Naive thymus-derived CD4-positive, alpha-beta T cell (primary cell): ENCODE measurements at regions of chr2 and their contacts with region 1.

Region 1: GRCh38 chr2:218568190-218569037 is at the starts of genes CNOT9 and USP37:
- DNase-seq: peak; percentile 99 to 100 (median 100)
- ATAC-seq: peak; percentile 95
- H3K4me3 ChIP-seq: peak within 1 kb of the TSS; percentile 78
- H3K4me3 Mint-ChIP-seq: peak within 1 kb of the TSS; percentile 90 to 100 (median 98)
- H3K27ac ChIP-seq: peak within 1 kb of the TSS; percentile 96
- H3K27ac Mint-ChIP-seq: peak within 1 kb of the TSS; percentile 97 to 100 (median 99)
- H3K4me1 ChIP-seq: peaks cover 22 to 31% of the 10 kb centered on the region in 2 donors
- H3K4me1 Mint-ChIP-seq: peaks cover 45 to 73% (median 64%) of the 10 kb centered on the region in 7 donors
- H3K27me3 ChIP-seq: no peaks in the 10 kb centered on the region
- H3K27me3 Mint-ChIP-seq: no peaks in the 10 kb centered on the region
- total RNA-seq, gene CNOT9: 44.7 to 99.6 (median 53.8) TPM
- total RNA-seq, gene USP37: 16.6 to 36.3 (median 28.1) TPM

Region 2: GRCh38 chr2:218216674-218217359 is 351.6 kb before region 1 on chr2 and contains the start of gene ARPC2:
- CTCF ChIA-PET with region 1: no interaction called
- POLR2A ChIA-PET with region 1: interaction called, 3 read pairs
- intact Hi-C with region 1: loop called (anchors 1 to 2 kb)
- DNase-seq: peak; percentile 91 to 97 (median 95)
- ATAC-seq: peak; percentile 90
- H3K4me3 ChIP-seq: peak within 1 kb of the TSS; percentile 90
- H3K4me3 Mint-ChIP-seq: peak within 1 kb of the TSS; percentile 90 to 97 (median 94)
- H3K27ac ChIP-seq: peak within 1 kb of the TSS; percentile 99
- H3K27ac Mint-ChIP-seq: peak within 1 kb of the TSS; percentile 94 to 98 (median 97)
- H3K4me1 ChIP-seq: peaks cover 25 to 33% of the 10 kb centered on the region in 2 donors
- H3K4me1 Mint-ChIP-seq: peaks cover 31 to 48% (median 42%) of the 10 kb centered on the region in 7 donors
- H3K27me3 ChIP-seq: no peaks in the 10 kb centered on the region
- H3K27me3 Mint-ChIP-seq: peaks cover 0 to 6% (median 0%) of the 10 kb centered on the region in 5 donors
- total RNA-seq, gene ARPC2: 330 to 694 (median 368) TPM

Region 3: DNA sequence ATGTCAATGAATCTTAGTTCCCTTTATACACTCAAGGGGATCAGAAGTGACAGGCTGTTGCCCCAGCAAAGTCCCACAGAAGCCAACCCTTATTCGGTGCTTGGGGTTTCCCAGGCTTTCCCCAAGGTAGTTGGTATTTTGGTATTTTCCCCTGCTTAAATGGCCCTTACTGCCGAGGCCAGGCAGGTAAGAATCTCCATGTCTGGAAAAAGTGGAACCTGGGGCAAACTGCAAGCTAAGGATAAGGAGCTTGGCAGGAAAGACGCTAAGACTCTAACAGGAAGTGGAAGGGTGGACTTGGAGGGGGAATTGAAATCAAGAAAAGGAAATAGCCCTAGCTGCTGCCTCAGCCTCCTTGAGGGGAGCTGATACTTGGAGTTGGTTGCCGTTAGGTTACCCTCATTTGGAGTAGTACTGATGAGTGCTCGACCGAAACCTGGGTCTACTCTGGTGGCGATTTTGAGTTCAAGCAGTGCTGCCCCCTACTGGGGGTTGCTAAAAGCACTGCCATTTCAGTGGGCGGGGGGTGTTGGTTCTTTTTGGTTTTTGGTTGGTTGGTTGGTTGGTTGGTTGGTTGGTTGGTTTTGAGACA is 310.9 kb before region 1 on chr2:
- CTCF ChIA-PET with region 1: no interaction called
- POLR2A ChIA-PET with region 1: no interaction called
- intact Hi-C with region 1: no loop called
- DNase-seq: peak; percentile 39 to 67 (median 59)
- ATAC-seq: peak; percentile 85
- H3K4me3 ChIP-seq: no peak overlapping the region
- H3K4me3 Mint-ChIP-seq: peak overlapping the region; percentile 42 to 68 (median 52)
- H3K27ac ChIP-seq: peak overlapping the region; percentile 67
- H3K27ac Mint-ChIP-seq: peak overlapping the region; percentile 84 to 95 (median 92)
- H3K4me1 ChIP-seq: peaks cover 0 to 7% of the 10 kb centered on the region in 2 donors
- H3K4me1 Mint-ChIP-seq: peaks cover 7 to 23% (median 17%) of the 10 kb centered on the region in 7 donors
- H3K27me3 ChIP-seq: no peaks in the 10 kb centered on the region
- H3K27me3 Mint-ChIP-seq: no peaks in the 10 kb centered on the region

Region 4: GRCh38 chr2:218406209-218406948 is 162.0 kb before region 1 on chr2:
- CTCF ChIA-PET with region 1: no interaction called
- POLR2A ChIA-PET with region 1: interaction called, 4 read pairs
- intact Hi-C with region 1: loop called (anchors 1 kb)
- DNase-seq: peak; percentile 75 to 94 (median 85)
- ATAC-seq: peak; percentile 81
- H3K4me3 ChIP-seq: peak overlapping the region; percentile 56
- H3K4me3 Mint-ChIP-seq: peak overlapping the region; percentile 77 to 95 (median 88)
- H3K27ac ChIP-seq: peak overlapping the region; percentile 75
- H3K27ac Mint-ChIP-seq: peak overlapping the region; percentile 83 to 95 (median 91)
- H3K4me1 ChIP-seq: peaks cover 23 to 32% of the 10 kb centered on the region in 2 donors
- H3K4me1 Mint-ChIP-seq: peaks cover 31 to 62% (median 53%) of the 10 kb centered on the region in 7 donors
- H3K27me3 ChIP-seq: no peaks in the 10 kb centered on the region
- H3K27me3 Mint-ChIP-seq: peaks cover 0 to 3% (median 0%) of the 10 kb centered on the region in 5 donors

Region 5: GRCh38 chr2:218648088-218648786 is 79.8 kb after region 1 on chr2:
- CTCF ChIA-PET with region 1: no interaction called
- POLR2A ChIA-PET with region 1: no interaction called
- intact Hi-C with region 1: loop called in 1 of 2 experiments (anchors 2 kb)
- DNase-seq: peak; percentile 15 to 55 (median 46)
- ATAC-seq: peak; percentile 91
- H3K4me3 ChIP-seq: no peak overlapping the region
- H3K4me3 Mint-ChIP-seq: peak overlapping the region in 1 of 10 donors; percentile 7
- H3K27ac ChIP-seq: no peak overlapping the region
- H3K27ac Mint-ChIP-seq: peak overlapping the region in 1 of 9 donors; percentile 35
- H3K4me1 ChIP-seq: peaks cover 0 to 7% of the 10 kb centered on the region in 2 donors
- H3K4me1 Mint-ChIP-seq: peaks cover 0 to 14% (median 12%) of the 10 kb centered on the region in 7 donors
- H3K27me3 ChIP-seq: no peaks in the 10 kb centered on the region
- H3K27me3 Mint-ChIP-seq: no peaks in the 10 kb centered on the region

Region 6: DNA sequence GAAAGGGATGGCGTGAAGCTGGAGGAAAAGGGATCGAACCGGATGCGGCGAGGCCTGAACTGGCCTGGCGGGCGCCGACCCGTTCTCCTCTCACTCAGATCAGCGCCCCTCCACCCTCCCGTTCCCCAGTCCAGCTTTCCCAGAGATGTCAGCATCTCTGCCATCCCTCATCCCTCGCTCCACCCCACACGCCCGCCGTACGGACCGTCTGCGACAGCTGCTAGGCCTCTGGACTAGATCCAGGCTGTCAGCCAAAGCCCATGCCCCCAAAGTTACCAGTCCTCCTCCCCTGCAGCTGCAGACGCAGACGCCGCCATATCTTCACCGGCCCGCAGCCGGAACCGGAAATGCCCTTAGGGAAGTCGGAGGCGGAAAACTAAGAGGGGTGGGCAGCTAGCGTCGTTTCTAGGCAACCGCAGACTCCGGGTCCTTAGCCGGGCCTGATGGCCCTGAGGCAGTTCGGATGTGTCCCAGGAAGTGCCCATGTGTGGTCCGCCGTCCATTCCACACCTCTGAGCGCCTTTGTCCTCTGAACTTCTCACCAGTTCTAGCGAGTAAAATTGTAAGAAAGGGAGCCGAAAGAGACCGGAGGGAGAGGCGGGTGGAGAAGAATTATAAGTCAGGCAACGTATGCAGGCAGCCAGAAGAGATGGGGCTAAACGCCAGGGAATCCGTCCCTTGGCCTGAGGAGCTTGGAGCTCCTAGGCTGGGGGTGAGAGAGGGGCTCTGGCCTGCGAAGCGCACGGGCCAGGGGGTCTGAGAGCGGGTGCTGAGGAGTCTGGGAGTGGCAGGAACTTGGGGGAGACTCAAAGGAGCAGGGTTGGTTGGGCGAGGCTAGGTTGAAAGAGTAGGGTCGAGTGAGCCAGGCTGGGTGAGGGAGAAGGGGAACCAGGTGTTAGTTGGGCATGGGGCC is 103.5 kb after region 1 on chr2 and contains the starts of genes RNF25 and STK36:
- CTCF ChIA-PET with region 1: no interaction called
- POLR2A ChIA-PET with region 1: no interaction called
- intact Hi-C with region 1: loop called in 1 of 2 experiments (anchors 1 kb)
- DNase-seq: peak; percentile 60 to 86 (median 79)
- ATAC-seq: peak; percentile 96
- H3K4me3 ChIP-seq: peak within 1 kb of the TSS; percentile 81
- H3K4me3 Mint-ChIP-seq: peak within 1 kb of the TSS; percentile 88 to 100 (median 98)
- H3K27ac ChIP-seq: peak within 1 kb of the TSS; percentile 84
- H3K27ac Mint-ChIP-seq: peak within 1 kb of the TSS; percentile 90 to 98 (median 96)
- H3K4me1 ChIP-seq: peaks cover 9 to 15% of the 10 kb centered on the region in 2 donors
- H3K4me1 Mint-ChIP-seq: peaks cover 14 to 29% (median 24%) of the 10 kb centered on the region in 7 donors
- H3K27me3 ChIP-seq: no peaks in the 10 kb centered on the region
- H3K27me3 Mint-ChIP-seq: no peaks in the 10 kb centered on the region
- total RNA-seq, gene RNF25: 12.6 to 33.4 (median 28.3) TPM
- total RNA-seq, gene STK36: 18.9 to 28.1 (median 19.7) TPM

Region 7: DNA sequence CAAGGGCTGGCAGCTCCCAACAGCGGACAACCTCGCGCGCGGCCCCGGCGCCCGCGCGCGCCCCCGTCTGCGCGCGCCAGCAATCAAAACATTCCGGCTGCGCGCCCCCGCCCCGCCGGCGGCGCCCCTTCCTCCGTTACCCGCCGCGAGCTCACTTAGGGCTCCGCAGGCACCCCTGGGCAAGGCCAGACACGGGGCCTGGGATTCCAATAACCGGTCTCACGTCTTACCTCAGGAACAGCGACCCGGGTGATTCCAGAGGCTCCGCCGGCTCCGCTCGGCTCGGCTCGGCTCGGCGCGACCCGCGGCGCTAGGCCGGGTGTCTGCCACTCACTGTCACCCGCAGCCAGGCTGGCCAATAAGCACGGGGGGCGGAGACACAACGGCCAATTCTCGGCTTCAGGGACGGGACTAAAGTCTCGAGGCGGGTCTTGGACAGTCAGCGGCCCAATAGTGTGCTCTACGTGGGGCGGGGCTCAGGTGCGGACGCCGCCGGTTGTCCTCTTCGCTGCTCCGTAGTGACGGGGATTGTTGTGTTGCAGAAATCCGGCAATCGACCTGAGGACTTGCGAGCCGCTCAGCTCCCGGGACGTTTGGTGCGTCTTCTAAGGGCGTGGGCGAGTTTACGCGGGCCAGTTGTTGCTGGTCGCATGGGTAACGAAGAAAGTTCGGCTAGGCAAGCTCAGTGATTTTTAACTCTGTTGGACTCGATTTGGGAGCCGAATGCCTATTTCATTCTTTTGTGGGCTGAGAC is 661.1 kb after region 1 on chr2 and contains the starts of genes ANKZF1 and ATG9A:
- CTCF ChIA-PET with region 1: no interaction called
- POLR2A ChIA-PET with region 1: no interaction called
- intact Hi-C with region 1: loop called in 1 of 2 experiments (anchors 1 kb)
- DNase-seq: peak; percentile 92 to 99 (median 99)
- ATAC-seq: peak; percentile 98
- H3K4me3 ChIP-seq: peak within 1 kb of the TSS; percentile 80
- H3K4me3 Mint-ChIP-seq: peak within 1 kb of the TSS; percentile 94 to 100 (median 98)
- H3K27ac ChIP-seq: peak within 1 kb of the TSS; percentile 90
- H3K27ac Mint-ChIP-seq: peak within 1 kb of the TSS; percentile 96 to 100 (median 96)
- H3K4me1 ChIP-seq: peaks cover 17 to 22% of the 10 kb centered on the region in 2 donors
- H3K4me1 Mint-ChIP-seq: peaks cover 33 to 83% (median 69%) of the 10 kb centered on the region in 7 donors
- H3K27me3 ChIP-seq: no peaks in the 10 kb centered on the region
- H3K27me3 Mint-ChIP-seq: no peaks in the 10 kb centered on the region
- total RNA-seq, gene ANKZF1: 117 to 287 (median 169) TPM
- total RNA-seq, gene ATG9A: 52.6 to 66.0 (median 60.9) TPM